ENCODE measurements at regions of chr7 and their contacts with region 1.

Region 1: DNA sequence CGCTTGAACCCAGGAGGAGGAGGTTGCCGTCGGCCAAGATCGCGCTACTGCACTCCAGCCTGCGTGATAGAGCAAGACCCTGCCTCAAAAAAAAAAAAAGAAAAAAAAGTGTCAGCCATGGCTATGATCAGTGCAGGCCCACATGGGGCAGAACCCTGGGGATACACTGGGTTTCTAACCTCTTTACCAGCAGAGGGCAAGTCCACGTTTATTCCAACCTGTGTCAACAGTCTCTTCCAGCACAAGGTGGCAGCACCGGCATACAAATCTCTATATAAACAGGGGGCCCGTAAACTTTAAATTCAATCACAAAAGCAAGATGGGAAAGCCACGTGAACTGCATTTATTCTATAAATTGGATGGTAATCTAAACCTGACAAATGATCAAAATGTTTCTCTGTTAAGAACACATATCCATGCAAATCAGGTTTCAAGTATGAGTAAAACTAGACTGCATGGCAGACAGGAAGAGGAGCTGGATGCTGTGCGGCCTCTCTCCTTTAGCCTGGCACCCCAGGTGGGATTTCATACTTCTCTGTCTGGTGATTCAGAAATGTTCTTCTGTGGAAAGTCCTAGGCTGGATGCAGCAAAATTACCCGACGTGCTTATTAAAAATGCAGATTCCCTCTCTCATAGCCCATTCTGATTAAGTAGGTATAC is 60.0 kb upstream of the STEAP1B start:
- DNase-seq: peak; percentile 60 to 77 (median 70)
- H3K4me3 ChIP-seq: no peak overlapping the region
- H3K4me3 Mint-ChIP-seq: peak overlapping the region in 1 of 2 donors; percentile 13
- H3K27ac ChIP-seq: no peak overlapping the region
- H3K27ac Mint-ChIP-seq: no peak overlapping the region
- H3K4me1 ChIP-seq: peaks cover 13 to 22% of the 10 kb centered on the region in 2 donors
- H3K4me1 Mint-ChIP-seq: peaks cover 30% of the 10 kb centered on the region
- H3K27me3 ChIP-seq: peaks cover 30 to 37% of the 10 kb centered on the region in 2 donors
- H3K27me3 Mint-ChIP-seq: peaks cover 29 to 38% (median 32%) of the 10 kb centered on the region in 3 donors
- CTCF ChIP-seq: peak; percentile 89

Region 2: GRCh38 chr7:22542254-22542653 is 17.7 kb before region 1 on chr7:
- intact Hi-C with region 1: no loop called
- DNase-seq: no peak
- H3K4me3 ChIP-seq: no peak overlapping the region
- H3K4me3 Mint-ChIP-seq: no peak overlapping the region
- H3K27ac ChIP-seq: no peak overlapping the region
- H3K27ac Mint-ChIP-seq: no peak overlapping the region
- H3K4me1 ChIP-seq: no peaks in the 10 kb centered on the region
- H3K4me1 Mint-ChIP-seq: no peaks in the 10 kb centered on the region
- H3K27me3 ChIP-seq: peaks cover 7 to 15% of the 10 kb centered on the region in 2 donors
- H3K27me3 Mint-ChIP-seq: peaks cover 5 to 8% (median 5%) of the 10 kb centered on the region in 3 donors
- CTCF ChIP-seq: no peak

Region 3: GRCh38 chr7:22672846-22673652 is 113.1 kb after region 1 on chr7:
- intact Hi-C with region 1: loop called in 1 of 2 experiments (anchors 10 kb)
- DNase-seq: no peak
- H3K4me3 ChIP-seq: no peak overlapping the region
- H3K4me3 Mint-ChIP-seq: no peak overlapping the region
- H3K27ac ChIP-seq: no peak overlapping the region
- H3K27ac Mint-ChIP-seq: peak overlapping the region in 1 of 7 donors; percentile 6
- H3K4me1 ChIP-seq: peaks cover 28 to 32% of the 10 kb centered on the region in 2 donors
- H3K4me1 Mint-ChIP-seq: peaks cover 31% of the 10 kb centered on the region
- H3K27me3 ChIP-seq: no peaks in the 10 kb centered on the region
- H3K27me3 Mint-ChIP-seq: peaks cover 0 to 6% (median 3%) of the 10 kb centered on the region in 3 donors
- CTCF ChIP-seq: no peak

Region 4: GRCh38 chr7:22726345-22727185 is 166.6 kb after region 1 on chr7:
- intact Hi-C with region 1: loop called (anchors 2 kb)
- DNase-seq: peak; percentile 50 to 78 (median 52)
- H3K4me3 ChIP-seq: peak overlapping the region in 2 of 3 experiments; percentile 10 to 62
- H3K4me3 Mint-ChIP-seq: peak overlapping the region; percentile 71 to 89
- H3K27ac ChIP-seq: no peak overlapping the region
- H3K27ac Mint-ChIP-seq: peak overlapping the region in 6 of 7 donors; percentile 41 to 89 (median 84)
- H3K4me1 ChIP-seq: peaks cover 53 to 61% of the 10 kb centered on the region in 2 donors
- H3K4me1 Mint-ChIP-seq: peaks cover 65% of the 10 kb centered on the region
- H3K27me3 ChIP-seq: peaks cover 7 to 14% of the 10 kb centered on the region in 2 donors
- H3K27me3 Mint-ChIP-seq: peaks cover 3 to 9% (median 6%) of the 10 kb centered on the region in 3 donors
- CTCF ChIP-seq: peak; percentile 70

Region 5: GRCh38 chr7:22782616-22783232 is 222.8 kb after region 1 on chr7:
- intact Hi-C with region 1: loop called (anchors 2 to 5 kb)
- DNase-seq: peak; percentile 50 to 65 (median 56)
- H3K4me3 ChIP-seq: no peak overlapping the region
- H3K4me3 Mint-ChIP-seq: no peak overlapping the region
- H3K27ac ChIP-seq: no peak overlapping the region
- H3K27ac Mint-ChIP-seq: no peak overlapping the region
- H3K4me1 ChIP-seq: no peaks in the 10 kb centered on the region
- H3K4me1 Mint-ChIP-seq: no peaks in the 10 kb centered on the region
- H3K27me3 ChIP-seq: no peaks in the 10 kb centered on the region
- H3K27me3 Mint-ChIP-seq: peaks cover 0 to 7% (median 2%) of the 10 kb centered on the region in 3 donors
- CTCF ChIP-seq: peak; percentile 84

Region 6: GRCh38 chr7:23013715-23014649 is 454.0 kb after region 1 on chr7 and contains the start of gene HYCC1:
- intact Hi-C with region 1: loop called in 1 of 2 experiments (anchors 10 kb)
- DNase-seq: peak; percentile 98 to 99 (median 99)
- H3K4me3 ChIP-seq: peak within 1 kb of the TSS; percentile 81 to 92 (median 89)
- H3K4me3 Mint-ChIP-seq: peak within 1 kb of the TSS; percentile 94 to 95
- H3K27ac ChIP-seq: peak within 1 kb of the TSS; percentile 76 to 77
- H3K27ac Mint-ChIP-seq: peak within 1 kb of the TSS; percentile 75 to 93 (median 90)
- H3K4me1 ChIP-seq: peaks cover 63 to 78% of the 10 kb centered on the region in 2 donors
- H3K4me1 Mint-ChIP-seq: peaks cover 29% of the 10 kb centered on the region
- H3K27me3 ChIP-seq: no peaks in the 10 kb centered on the region
- H3K27me3 Mint-ChIP-seq: peaks cover 0 to 4% (median 2%) of the 10 kb centered on the region in 3 donors
- CTCF ChIP-seq: peak; percentile 83
- polyA plus RNA-seq, gene HYCC1: 4.7 to 12.7 (median 12.1) TPM

Region 7: GRCh38 chr7:23055582-23056178 is 495.7 kb after region 1 on chr7:
- intact Hi-C with region 1: loop called in 1 of 2 experiments (anchors 10 kb)
- DNase-seq: peak; percentile 62 to 81 (median 70)
- H3K4me3 ChIP-seq: no peak overlapping the region
- H3K4me3 Mint-ChIP-seq: no peak overlapping the region
- H3K27ac ChIP-seq: no peak overlapping the region
- H3K27ac Mint-ChIP-seq: no peak overlapping the region
- H3K4me1 ChIP-seq: no peaks in the 10 kb centered on the region
- H3K4me1 Mint-ChIP-seq: peaks cover 5% of the 10 kb centered on the region
- H3K27me3 ChIP-seq: no peaks in the 10 kb centered on the region
- H3K27me3 Mint-ChIP-seq: peaks cover 0 to 5% (median 1%) of the 10 kb centered on the region in 3 donors
- CTCF ChIP-seq: peak; percentile 94

Measured in CD14-positive monocyte (primary cell).